ENCODE measurements at regions of chr17 and their contacts with region 1.

Region 1: GRCh38 chr17:42405963-42406495 is 17.0 kb downstream of the CAVIN1 start:
- DNase-seq: peak; percentile 94
- ATAC-seq: peak; percentile 77

Region 2: GRCh38 chr17:42322382-42323267 is 83.4 kb before region 1 on chr17:
- intact Hi-C with region 1: loop called (anchors 1 kb)
- DNase-seq: peak; percentile 93
- ATAC-seq: peak; percentile 84

Region 3: DNA sequence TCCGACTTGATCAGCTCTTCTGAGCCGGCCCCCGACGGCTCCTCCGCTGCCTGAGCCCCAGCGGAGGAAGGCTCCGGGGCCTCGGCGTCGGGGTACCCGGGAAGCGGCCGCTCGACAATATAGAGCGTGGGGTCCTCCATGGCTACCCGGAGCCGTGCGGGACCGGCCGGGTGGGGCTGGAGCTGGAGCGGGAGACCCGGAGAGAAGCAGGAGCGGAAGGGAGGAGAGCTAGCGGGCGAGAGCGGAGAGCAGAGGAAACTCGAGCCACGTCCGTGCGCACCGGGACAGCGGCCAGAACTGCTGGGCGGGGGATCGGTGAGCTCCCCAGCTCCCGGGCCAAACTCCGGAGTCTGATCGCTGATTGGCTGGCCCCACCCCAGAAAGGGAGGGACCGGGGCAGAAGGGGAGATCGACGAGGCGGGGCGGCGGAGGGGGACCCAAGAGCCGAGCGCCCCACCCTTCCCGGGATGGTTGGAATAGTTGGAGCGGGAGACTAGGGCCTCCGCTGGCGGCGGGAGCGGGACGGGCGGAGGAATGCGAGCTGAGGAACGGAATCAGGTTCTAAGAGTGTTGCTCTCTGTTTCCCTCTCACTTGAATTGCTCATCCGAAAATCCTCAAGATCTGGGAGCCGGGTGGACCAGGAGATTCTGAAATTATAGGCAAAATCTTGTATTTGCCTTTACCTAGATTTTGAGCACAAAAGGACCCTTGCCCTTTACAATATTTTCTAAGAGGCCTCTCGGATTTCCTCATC is 17.1 kb after region 1 on chr17 and contains the start of gene CAVIN1:
- intact Hi-C with region 1: loop called (anchors 2 kb)
- DNase-seq: peak; percentile 99
- ATAC-seq: peak; percentile 92
- total RNA-seq, gene CAVIN1: 240 TPM

Region 4: GRCh38 chr17:42459256-42459800 is 53.3 kb after region 1 on chr17:
- intact Hi-C with region 1: loop called (anchors 5 kb)
- DNase-seq: peak; percentile 77
- ATAC-seq: peak; percentile 40

Measured in Right ventricle myocardium inferior (tissue), 1 donor.